Caco-2 (cell line): ENCODE measurements at regions of chr3 and their contacts with region 1.

Region 1: DNA sequence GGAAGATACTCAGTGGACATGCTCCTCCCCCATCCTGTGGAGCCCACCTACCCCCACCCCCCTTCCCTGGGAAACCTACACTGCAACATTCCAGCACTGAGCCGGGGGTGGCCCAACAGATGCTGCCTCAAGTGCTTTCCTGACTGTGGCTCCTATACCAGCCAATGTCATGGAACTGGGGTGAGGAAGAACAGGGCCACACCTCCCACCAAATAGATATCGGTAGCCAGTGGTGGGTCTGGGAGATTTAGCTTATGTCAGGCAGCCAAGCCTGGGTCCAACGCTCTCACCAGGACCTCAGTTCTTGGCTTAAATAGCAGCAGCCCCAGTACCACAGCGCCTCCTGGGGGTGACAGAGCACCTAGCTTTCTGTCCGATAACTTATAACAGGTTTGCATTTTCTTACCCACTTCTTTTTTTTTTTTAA is 30.3 kb downstream of the CDC25A start:
- DNase-seq: peak in 1 of 2 experiments; percentile 55
- H3K4me3 ChIP-seq: no peak overlapping the region
- H3K4me3 Mint-ChIP-seq: no peak overlapping the region
- H3K27ac Mint-ChIP-seq: no peak overlapping the region
- H3K4me1 ChIP-seq: no peaks in the 10 kb centered on the region
- H3K4me1 Mint-ChIP-seq: no peaks in the 10 kb centered on the region
- H3K27me3 ChIP-seq: no peaks in the 10 kb centered on the region
- H3K27me3 Mint-ChIP-seq: no peaks in the 10 kb centered on the region
- CTCF ChIP-seq: peak; percentile 37 to 51

Region 2: GRCh38 chr3:47746264-47746663 is 411.7 kb before region 1 on chr3:
- CTCF ChIA-PET with region 1: interaction called, 14 read pairs
- POLR2A ChIA-PET with region 1: no interaction called
- intact Hi-C with region 1: no loop called
- DNase-seq: no peak
- H3K4me3 ChIP-seq: no peak overlapping the region
- H3K4me3 Mint-ChIP-seq: no peak overlapping the region
- H3K27ac Mint-ChIP-seq: no peak overlapping the region
- H3K4me1 ChIP-seq: no peaks in the 10 kb centered on the region
- H3K4me1 Mint-ChIP-seq: no peaks in the 10 kb centered on the region
- H3K27me3 ChIP-seq: no peaks in the 10 kb centered on the region
- H3K27me3 Mint-ChIP-seq: no peaks in the 10 kb centered on the region
- CTCF ChIP-seq: no peak